ENCODE measurements at regions of chr16 and their contacts with region 1.

Region 1: DNA sequence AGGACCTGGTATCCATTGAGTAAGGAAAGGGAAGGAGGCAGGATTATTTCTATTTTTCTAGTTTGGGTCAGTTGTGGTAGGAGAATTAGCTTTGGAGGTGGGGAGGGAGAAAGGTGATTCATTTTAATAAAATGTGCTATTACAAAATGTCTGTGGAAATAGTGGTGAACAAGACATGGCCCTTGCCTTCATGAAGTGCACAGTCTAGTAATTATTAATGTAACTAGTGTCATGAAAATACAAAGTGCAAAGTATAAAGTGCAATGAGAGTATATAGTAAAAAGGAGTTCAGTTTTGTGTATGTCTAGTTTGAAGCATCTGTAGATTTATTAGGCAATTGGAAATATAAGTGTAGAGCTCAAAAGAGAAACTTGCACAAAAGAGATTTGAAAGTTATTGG is 11.9 kb downstream of the NFATC3 start:
- DNase-seq: no peak
- H3K4me3 ChIP-seq: no peak overlapping the region
- H3K27ac ChIP-seq: no peak overlapping the region
- H3K4me1 ChIP-seq: peaks cover 20 to 55% (median 38%) of the 10 kb centered on the region in 4 donors
- H3K27me3 ChIP-seq: no peaks in the 10 kb centered on the region
- CTCF ChIP-seq: no peak
- EP300 ChIP-seq: no peak
- POLR2A ChIP-seq: no peak

Region 2: GRCh38 chr16:68146585-68146984 is 49.5 kb after region 1 on chr16:
- intact Hi-C with region 1: loop called (anchors 5 kb)
- DNase-seq: no peak
- H3K4me3 ChIP-seq: no peak overlapping the region
- H3K27ac ChIP-seq: no peak overlapping the region
- H3K4me1 ChIP-seq: peaks cover 10 to 47% (median 35%) of the 10 kb centered on the region in 4 donors
- H3K27me3 ChIP-seq: no peaks in the 10 kb centered on the region
- CTCF ChIP-seq: no peak
- EP300 ChIP-seq: no peak
- POLR2A ChIP-seq: no peak

Measured in esophagus muscularis mucosa (tissue), 4 donors.